Dorsolateral prefrontal cortex (tissue), 120 donors: ENCODE measurements at regions of chr6 and their contacts with region 1.

Region 1: GRCh38 chr6:30616811-30617564 is at the start of gene PPP1R10:
- DNase-seq: peak; percentile 96 to 99 (median 99)
- H3K4me3 ChIP-seq: peak within 1 kb of the TSS; percentile 62 to 100 (median 91)
- H3K27ac ChIP-seq: peak within 1 kb of the TSS; percentile 95 to 100 (median 99)
- H3K27me3 ChIP-seq: no peaks in the 10 kb centered on the region
- CTCF ChIP-seq: no peak
- total RNA-seq, gene PPP1R10: 42.2 to 100 (median 68.4) TPM

Region 2: GRCh38 chr6:30411515-30412207 is 205.3 kb before region 1 on chr6:
- intact Hi-C with region 1: no loop called
- DNase-seq: peak in 3 of 10 donors; percentile 27 to 66 (median 35)
- H3K4me3 ChIP-seq: no peak overlapping the region
- H3K27ac ChIP-seq: no peak overlapping the region
- H3K27me3 ChIP-seq: peaks cover 0 to 52% (median 5%) of the 10 kb centered on the region in 45 donors
- CTCF ChIP-seq: peak in 54 of 56 donors; percentile 13 to 83 (median 65)

Region 3: GRCh38 chr6:30541515-30542403 is 75.2 kb before region 1 on chr6:
- intact Hi-C with region 1: no loop called
- DNase-seq: peak; percentile 57 to 81 (median 72)
- H3K4me3 ChIP-seq: peak overlapping the region; percentile 8 to 66 (median 48)
- H3K27ac ChIP-seq: peak overlapping the region in 11 of 59 donors; percentile 2 to 60 (median 19)
- H3K27me3 ChIP-seq: no peaks in the 10 kb centered on the region
- CTCF ChIP-seq: peak; percentile 84 to 100 (median 97)

Region 4: DNA sequence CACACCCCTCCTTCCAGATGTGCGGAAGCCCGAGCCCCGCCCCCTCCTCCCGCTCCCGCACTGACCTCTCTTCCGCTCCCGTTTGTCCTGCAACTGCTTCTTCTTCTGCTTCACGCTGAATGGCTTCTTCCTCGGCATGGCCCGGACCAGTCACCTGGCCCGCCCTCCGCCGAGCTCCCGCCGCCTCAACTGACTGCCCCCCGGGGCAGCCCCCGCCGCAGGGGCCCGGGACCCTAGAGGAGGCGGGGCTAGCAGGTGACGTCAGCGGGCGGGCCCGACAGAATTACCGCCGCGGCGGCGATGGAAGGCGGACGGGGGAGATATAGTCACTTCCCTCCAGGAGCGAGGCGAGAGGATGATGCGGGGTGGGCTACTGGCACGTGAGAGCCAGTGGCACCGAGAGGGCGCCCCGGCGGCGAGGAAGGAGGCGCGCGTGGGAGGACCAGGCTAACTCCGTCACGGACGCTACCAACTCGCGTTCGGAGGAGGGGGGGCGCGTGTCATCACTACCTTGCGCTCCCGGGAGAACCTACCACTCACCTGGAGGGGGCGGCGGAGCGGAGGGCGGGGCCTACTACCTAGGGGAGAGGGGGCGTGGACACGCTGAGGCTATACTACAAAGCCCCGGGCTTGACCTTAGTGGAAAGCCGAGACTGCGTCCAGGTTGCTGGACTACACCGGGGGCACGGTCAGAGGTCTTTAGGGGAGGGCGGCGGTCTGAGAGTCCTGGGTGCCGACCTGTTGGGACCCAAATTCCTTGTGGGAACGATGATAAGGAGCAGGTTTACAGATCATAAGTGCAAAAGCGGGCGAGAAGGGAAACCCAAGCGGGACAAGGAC is 60.7 kb before region 1 on chr6 and contains the start of gene GNL1:
- intact Hi-C with region 1: loop called in 1 of 2 experiments (anchors 5 kb)
- DNase-seq: peak; percentile 87 to 95 (median 92)
- H3K4me3 ChIP-seq: peak within 1 kb of the TSS; percentile 69 to 100 (median 95)
- H3K27ac ChIP-seq: peak within 1 kb of the TSS; percentile 73 to 100 (median 97)
- H3K27me3 ChIP-seq: no peaks in the 10 kb centered on the region
- CTCF ChIP-seq: peak in 1 of 56 donors; percentile 17
- total RNA-seq, gene GNL1: 56.1 to 116 (median 87.5) TPM

Region 5: DNA sequence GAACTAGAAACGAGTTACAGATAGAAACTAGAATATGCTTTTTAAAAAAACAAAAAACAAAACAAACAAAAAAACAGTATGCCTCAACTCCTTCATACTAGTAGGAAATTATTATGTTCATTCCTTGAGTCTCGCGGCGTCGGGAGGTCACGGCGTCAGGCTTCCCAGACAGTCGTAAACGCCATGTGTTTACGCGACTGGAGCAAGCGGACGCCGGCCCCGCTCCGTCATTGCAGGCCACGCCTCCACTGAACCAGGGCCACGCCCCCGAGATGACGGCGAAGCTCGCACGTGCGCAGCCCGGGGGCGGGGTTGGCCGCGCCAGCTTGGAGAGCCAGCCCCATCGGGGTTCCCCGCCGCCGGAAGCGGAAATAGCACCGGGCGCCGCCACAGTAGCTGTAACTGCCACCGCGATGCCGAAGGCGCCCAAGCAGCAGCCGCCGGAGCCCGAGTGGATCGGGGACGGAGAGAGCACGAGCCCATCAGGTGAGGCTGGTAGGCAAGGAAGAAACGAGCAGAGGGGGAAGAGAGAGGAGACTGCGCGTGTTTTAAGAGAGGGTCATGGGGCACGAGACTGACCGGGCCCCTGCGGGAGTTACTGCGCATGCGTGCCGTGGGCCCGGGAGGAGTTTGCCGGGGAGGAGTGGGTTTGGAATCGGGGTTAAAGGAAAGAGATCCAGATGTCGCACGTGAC is 45.8 kb before region 1 on chr6 and contains the start of gene ABCF1:
- intact Hi-C with region 1: loop called (anchors 2 to 5 kb)
- DNase-seq: peak; percentile 97 to 100 (median 98)
- H3K4me3 ChIP-seq: peak within 1 kb of the TSS; percentile 60 to 99 (median 84)
- H3K27ac ChIP-seq: peak within 1 kb of the TSS; percentile 16 to 95 (median 87)
- H3K27me3 ChIP-seq: no peaks in the 10 kb centered on the region
- CTCF ChIP-seq: peak in 27 of 56 donors; percentile 1 to 53 (median 28)
- total RNA-seq, gene ABCF1: 24.2 to 44.5 (median 34.1) TPM

Region 6: GRCh38 chr6:30646458-30647241 is 29.7 kb after region 1 on chr6 and contains the start of gene C6orf136:
- intact Hi-C with region 1: loop called in 1 of 2 experiments (anchors 2 kb)
- DNase-seq: peak; percentile 90 to 96 (median 94)
- H3K4me3 ChIP-seq: peak within 1 kb of the TSS; percentile 58 to 100 (median 94)
- H3K27ac ChIP-seq: peak within 1 kb of the TSS; percentile 58 to 99 (median 96)
- H3K27me3 ChIP-seq: no peaks in the 10 kb centered on the region
- CTCF ChIP-seq: peak in 25 of 56 donors; percentile 7 to 55 (median 24)
- total RNA-seq, gene C6orf136: 30.6 to 105 (median 61.8) TPM

Region 7: DNA sequence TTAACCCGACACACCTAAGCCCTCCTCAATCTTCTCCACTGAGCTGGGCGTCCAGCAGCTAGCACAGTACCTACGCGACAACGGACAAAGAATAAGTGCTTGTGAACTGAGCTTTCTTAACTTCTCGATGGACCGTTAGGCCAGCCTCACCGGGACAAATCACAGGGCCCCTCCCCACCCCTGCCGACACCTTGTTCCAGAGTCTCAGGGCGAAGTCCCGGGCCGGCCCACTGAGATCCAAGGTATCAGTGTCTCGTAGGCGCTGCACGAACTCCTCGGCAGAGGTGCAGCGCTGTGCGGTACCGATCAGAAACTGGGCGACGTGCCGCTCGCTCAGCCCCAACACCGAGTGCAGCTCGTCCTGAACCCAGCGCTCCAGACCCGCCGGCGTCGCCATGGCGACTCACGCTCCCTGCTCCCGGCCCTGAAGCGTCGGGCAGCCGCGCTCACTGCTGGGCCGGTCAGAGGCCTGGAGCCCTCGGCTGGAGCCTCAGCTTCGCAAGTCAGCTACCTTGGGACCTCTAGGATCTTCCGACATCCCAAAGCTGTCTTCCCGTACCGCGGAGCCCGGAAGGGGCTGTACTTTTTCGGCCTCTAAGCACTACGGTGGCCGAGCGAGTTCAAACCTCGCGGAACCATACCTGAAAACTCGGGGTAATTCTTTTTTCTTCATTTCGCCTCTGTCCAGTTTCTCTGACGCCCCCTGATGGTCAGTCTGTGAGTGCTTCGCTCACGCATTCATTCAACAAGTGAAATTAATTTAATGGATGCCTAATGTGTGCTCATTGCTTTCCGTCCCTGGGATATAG is 55.7 kb after region 1 on chr6 and contains the start of gene DHX16:
- intact Hi-C with region 1: loop called in 1 of 2 experiments (anchors 2 kb)
- DNase-seq: peak; percentile 78 to 93 (median 90)
- H3K4me3 ChIP-seq: peak within 1 kb of the TSS; percentile 63 to 100 (median 95)
- H3K27ac ChIP-seq: peak within 1 kb of the TSS in 49 of 59 donors; percentile 12 to 91 (median 69)
- H3K27me3 ChIP-seq: no peaks in the 10 kb centered on the region
- CTCF ChIP-seq: peak; percentile 78 to 100 (median 92)
- total RNA-seq, gene DHX16: 15.0 to 28.6 (median 22.7) TPM